ENCODE measurements at regions of chr10 and their contacts with region 1.

Region 1: DNA sequence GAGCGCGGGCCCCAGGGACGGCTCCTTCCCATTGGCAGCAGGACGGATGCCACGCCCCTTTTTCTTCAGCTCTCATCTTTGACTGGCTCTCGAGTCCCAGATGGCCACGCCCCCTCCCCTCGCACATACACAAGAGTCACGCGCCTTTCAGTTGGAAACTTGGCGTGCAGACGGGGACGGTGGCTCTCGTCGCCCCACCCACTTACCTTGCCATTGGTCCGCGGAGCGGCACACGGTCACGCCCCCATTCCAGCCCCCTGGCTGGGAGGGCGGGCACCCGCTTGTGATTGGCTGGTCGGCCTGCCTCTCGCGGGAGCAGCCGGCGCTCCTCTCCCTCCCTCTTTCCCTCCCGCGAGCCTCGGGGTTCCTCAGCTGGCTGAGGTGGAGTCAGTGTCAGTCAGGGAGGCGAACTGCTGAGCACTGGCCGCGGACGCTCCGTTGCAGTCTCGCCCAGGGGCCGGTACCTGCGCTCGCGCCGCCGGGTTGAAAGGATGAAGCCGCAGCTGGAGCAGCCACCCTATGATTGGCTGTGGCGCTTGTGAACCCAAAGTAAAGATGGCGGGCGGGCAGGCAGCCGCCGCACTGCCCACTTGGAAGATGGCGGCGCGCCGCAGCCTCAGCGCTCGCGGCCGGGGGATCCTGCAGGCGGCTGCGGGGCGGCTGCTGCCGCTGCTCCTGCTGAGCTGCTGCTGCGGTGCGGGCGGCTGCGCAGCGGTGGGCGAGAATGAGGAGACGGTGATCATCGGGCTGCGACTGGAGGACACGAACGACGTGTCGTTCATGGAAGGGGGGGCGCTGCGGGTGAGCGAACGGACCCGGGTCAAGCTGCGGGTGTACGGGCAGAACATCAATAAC is at the start of gene CNNM2:
- DNase-seq: peak; percentile 100
- H3K4me3 Mint-ChIP-seq: peak within 1 kb of the TSS; percentile 90
- H3K27ac Mint-ChIP-seq: peak within 1 kb of the TSS; percentile 84
- H3K4me1 Mint-ChIP-seq: peaks cover 67% of the 10 kb centered on the region
- H3K27me3 Mint-ChIP-seq: peaks cover 3% of the 10 kb centered on the region
- total RNA-seq, gene CNNM2: 7.9 to 8.4 TPM

Region 2: DNA sequence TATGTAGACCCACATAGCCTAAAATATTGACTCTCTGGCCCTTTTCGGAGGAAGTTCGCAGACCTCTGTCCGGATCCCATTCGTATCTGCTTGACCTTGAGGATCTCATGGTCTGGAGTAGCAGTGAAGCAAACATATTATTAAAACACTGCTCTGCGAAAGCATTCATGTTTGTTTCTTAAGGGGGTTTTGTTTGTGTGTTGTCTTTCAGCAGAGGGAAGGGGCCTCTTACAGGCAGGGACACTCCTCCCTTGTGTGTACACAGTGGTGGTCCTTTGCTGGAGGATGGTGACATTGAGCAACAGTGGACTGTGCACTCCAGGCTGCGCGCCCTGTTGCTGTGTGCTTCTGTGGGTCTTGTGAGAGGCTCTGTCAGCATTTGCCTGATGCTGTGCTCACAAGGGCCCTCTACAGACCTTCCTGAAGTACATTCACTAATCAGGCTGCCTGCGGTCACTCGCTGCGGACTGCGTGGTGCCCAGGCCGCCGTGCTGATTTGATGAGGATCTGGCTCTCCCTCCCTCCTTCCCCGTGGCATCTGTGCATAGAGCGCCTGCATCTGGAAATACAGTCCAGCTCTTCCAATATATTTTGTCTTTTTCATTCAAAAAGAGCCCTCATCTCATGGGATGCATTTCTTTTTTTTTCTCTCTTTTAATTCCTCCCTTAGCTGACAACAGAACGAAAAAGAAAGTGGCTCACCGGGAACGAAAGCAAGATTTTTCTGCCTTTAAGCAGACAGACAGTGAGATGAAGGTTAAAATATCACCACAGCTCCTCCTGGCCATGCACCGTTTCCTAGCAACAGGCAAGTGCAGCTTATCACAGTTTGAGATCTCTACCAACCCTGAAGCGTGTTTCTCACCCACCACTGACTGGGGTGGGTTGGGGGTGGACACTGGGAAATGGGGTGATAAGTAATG is 135.7 kb after region 1 on chr10:
- CTCF ChIA-PET with region 1: interaction called, 38 read pairs
- POLR2A ChIA-PET with region 1: interaction called, 3 read pairs
- DNase-seq: peak; percentile 69
- H3K4me3 Mint-ChIP-seq: peak overlapping the region; percentile 71
- H3K27ac Mint-ChIP-seq: peak overlapping the region; percentile 77
- H3K4me1 Mint-ChIP-seq: peaks cover 27% of the 10 kb centered on the region
- H3K27me3 Mint-ChIP-seq: no peaks in the 10 kb centered on the region

Region 3: GRCh38 chr10:103069453-103070331 is 151.5 kb after region 1 on chr10:
- CTCF ChIA-PET with region 1: interaction called, 90 read pairs
- POLR2A ChIA-PET with region 1: interaction called, 26 read pairs
- DNase-seq: peak; percentile 73
- H3K4me3 Mint-ChIP-seq: no peak overlapping the region
- H3K27ac Mint-ChIP-seq: peak overlapping the region; percentile 69
- H3K4me1 Mint-ChIP-seq: peaks cover 30% of the 10 kb centered on the region
- H3K27me3 Mint-ChIP-seq: no peaks in the 10 kb centered on the region

Region 4: GRCh38 chr10:103244663-103245271 is 326.6 kb after region 1 on chr10:
- CTCF ChIA-PET with region 1: interaction called, 36 read pairs
- POLR2A ChIA-PET with region 1: interaction called, 6 read pairs
- DNase-seq: peak; percentile 69
- H3K4me3 Mint-ChIP-seq: no peak overlapping the region
- H3K27ac Mint-ChIP-seq: no peak overlapping the region
- H3K4me1 Mint-ChIP-seq: peaks cover 23% of the 10 kb centered on the region
- H3K27me3 Mint-ChIP-seq: peaks cover 5% of the 10 kb centered on the region